ENCODE measurements at regions of chr9 and their contacts with region 1.

Region 1: DNA sequence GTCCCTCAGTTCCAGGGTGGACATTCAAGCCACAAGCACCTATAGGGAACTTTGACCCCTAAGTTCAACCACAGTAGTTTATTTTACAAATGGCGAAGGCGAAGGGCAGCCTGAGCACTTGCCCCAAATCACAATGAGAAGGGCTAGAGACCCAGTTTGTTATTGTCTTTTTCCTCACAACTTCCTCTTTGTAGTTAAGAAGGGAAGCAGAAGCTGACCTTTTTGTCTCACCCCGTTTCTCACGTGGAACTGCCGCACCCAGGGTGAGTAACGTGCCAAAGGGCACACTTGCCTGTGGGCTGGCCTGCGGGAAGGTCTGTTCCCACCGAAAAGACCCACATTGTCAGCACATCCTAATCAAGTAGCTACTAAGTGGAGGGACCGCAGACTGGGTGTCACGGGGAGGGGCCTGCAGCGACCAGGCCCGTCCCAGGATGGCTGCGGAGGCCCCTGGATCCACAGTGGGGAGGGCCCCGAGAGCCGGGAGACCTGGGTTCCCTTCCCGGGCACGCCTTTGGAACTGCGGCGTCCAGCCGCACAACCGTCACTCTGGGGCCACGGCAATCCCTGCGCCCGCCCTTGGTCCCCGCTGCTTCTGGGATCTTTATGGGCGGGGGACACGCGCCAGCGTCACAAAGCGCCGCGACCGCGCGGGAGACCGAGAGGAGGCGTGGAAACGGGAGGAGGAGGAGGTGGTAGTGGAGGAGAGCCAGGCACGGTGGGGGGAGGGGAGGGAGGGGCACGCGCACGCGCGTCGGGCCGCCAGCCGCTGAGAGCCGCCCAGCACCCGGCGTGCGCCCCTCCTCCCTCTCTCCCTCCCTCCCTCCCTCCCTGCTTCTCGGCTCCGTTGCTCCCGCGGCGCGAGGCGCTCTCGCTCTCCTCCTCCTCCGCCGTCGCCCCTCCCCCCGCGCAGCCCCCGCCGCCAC is at the start of gene UBE2R2:
- DNase-seq: peak; percentile 97
- ATAC-seq: peak; percentile 81
- H3K4me3 Mint-ChIP-seq: peak within 1 kb of the TSS; percentile 89
- H3K27ac Mint-ChIP-seq: peak within 1 kb of the TSS; percentile 92
- H3K4me1 Mint-ChIP-seq: peaks cover 56% of the 10 kb centered on the region
- H3K27me3 Mint-ChIP-seq: no peaks in the 10 kb centered on the region
- total RNA-seq, gene UBE2R2: 47.7 to 49.5 TPM

Region 2: GRCh38 chr9:33167046-33167808 is 649.4 kb before region 1 on chr9 and contains the start of gene B4GALT1:
- CTCF ChIA-PET with region 1: no interaction called
- POLR2A ChIA-PET with region 1: no interaction called
- intact Hi-C with region 1: loop called in 1 of 2 experiments (anchors 2 kb)
- DNase-seq: peak; percentile 99
- ATAC-seq: peak; percentile 83
- H3K4me3 Mint-ChIP-seq: peak within 1 kb of the TSS; percentile 95
- H3K27ac Mint-ChIP-seq: peak within 1 kb of the TSS; percentile 97
- H3K4me1 Mint-ChIP-seq: peaks cover 50% of the 10 kb centered on the region
- H3K27me3 Mint-ChIP-seq: no peaks in the 10 kb centered on the region
- total RNA-seq, gene B4GALT1: 44.5 to 47.1 TPM

Region 3: DNA sequence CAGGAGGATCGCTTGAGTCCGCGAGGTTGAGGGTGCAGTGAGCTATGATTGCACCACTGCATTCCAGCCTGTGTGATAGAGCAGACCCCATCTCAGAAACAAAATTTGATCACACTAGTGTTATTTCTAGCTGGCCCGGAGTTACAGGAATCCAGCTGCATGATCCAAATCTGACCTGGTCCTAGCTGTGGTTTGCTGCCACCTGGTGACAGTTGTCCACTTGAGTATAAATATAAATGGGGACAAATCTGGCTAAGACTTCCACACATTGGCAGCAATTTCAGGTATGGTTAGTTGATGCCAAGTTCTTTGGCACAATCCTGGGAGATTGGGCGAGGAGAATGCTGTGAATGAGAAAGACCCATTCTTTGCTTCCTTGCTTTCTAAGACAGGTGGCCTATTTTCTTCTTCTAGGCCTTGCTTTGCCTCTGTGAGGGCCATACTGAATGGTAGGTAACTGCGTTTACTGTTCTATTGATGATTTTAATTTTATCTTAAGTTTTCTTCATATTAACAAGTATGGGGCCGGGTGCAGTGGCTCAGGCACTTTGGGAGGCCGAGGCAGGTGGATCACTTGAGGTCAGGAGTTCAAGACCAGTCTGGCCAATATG is 35.7 kb after region 1 on chr9:
- CTCF ChIA-PET with region 1: interaction called, 27 read pairs
- POLR2A ChIA-PET with region 1: no interaction called
- intact Hi-C with region 1: loop called (anchors 1 kb)
- DNase-seq: peak; percentile 63
- ATAC-seq: peak; percentile 58
- H3K4me3 Mint-ChIP-seq: no peak overlapping the region
- H3K27ac Mint-ChIP-seq: no peak overlapping the region
- H3K4me1 Mint-ChIP-seq: peaks cover 41% of the 10 kb centered on the region
- H3K27me3 Mint-ChIP-seq: no peaks in the 10 kb centered on the region

Region 4: DNA sequence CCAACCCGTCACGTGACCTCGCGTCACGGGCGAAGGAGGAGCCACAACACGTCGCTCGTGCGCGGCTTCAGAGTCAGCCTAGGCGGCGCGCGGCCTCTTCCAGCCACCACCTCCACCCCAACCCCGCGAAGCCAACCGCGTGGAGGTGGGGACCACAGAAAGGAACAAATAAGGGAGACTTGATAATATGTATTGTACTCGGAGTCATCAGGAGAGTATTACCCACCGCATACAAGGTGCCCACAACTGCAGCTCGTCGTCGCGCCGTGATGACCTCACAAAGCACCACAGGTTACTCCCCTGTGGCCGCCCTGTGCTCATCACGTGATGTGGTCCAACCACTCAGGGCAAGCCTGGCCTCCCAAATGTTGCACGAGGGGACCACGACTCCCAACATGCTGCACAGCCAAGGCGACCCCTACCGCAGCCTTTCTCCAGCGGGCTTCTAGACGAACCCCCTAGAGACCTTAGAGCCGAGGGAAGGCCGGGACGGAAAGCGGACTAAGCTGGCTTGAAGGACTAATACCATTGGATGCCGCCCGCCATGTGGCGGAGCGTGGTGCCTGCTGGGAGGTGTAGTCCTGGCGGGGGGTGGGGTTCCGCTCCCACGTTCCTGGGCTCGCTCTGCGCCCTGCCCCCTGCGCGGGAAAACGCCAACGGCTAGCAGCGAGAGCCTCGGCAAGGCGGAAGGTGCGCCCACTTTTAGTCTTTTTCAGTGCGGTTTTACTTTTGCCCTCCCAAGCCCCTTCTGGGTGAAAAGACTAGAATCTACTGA is 232.5 kb after region 1 on chr9:
- CTCF ChIA-PET with region 1: no interaction called
- POLR2A ChIA-PET with region 1: interaction called, 5 read pairs
- intact Hi-C with region 1: loop called (anchors 1 kb)
- DNase-seq: peak; percentile 98
- ATAC-seq: peak; percentile 84
- H3K4me3 Mint-ChIP-seq: peak overlapping the region; percentile 90
- H3K27ac Mint-ChIP-seq: peak overlapping the region; percentile 99
- H3K4me1 Mint-ChIP-seq: peaks cover 38% of the 10 kb centered on the region
- H3K27me3 Mint-ChIP-seq: no peaks in the 10 kb centered on the region

Region 5: GRCh38 chr9:34178520-34179212 is 362.1 kb after region 1 on chr9 and contains the start of gene UBAP1:
- CTCF ChIA-PET with region 1: no interaction called
- POLR2A ChIA-PET with region 1: no interaction called
- intact Hi-C with region 1: loop called in 1 of 2 experiments (anchors 2 kb)
- DNase-seq: peak; percentile 98
- ATAC-seq: peak; percentile 97
- H3K4me3 Mint-ChIP-seq: peak within 1 kb of the TSS; percentile 93
- H3K27ac Mint-ChIP-seq: peak within 1 kb of the TSS; percentile 96
- H3K4me1 Mint-ChIP-seq: peaks cover 20% of the 10 kb centered on the region
- H3K27me3 Mint-ChIP-seq: no peaks in the 10 kb centered on the region
- total RNA-seq, gene UBAP1: 29.5 to 43.3 TPM

Region 6: DNA sequence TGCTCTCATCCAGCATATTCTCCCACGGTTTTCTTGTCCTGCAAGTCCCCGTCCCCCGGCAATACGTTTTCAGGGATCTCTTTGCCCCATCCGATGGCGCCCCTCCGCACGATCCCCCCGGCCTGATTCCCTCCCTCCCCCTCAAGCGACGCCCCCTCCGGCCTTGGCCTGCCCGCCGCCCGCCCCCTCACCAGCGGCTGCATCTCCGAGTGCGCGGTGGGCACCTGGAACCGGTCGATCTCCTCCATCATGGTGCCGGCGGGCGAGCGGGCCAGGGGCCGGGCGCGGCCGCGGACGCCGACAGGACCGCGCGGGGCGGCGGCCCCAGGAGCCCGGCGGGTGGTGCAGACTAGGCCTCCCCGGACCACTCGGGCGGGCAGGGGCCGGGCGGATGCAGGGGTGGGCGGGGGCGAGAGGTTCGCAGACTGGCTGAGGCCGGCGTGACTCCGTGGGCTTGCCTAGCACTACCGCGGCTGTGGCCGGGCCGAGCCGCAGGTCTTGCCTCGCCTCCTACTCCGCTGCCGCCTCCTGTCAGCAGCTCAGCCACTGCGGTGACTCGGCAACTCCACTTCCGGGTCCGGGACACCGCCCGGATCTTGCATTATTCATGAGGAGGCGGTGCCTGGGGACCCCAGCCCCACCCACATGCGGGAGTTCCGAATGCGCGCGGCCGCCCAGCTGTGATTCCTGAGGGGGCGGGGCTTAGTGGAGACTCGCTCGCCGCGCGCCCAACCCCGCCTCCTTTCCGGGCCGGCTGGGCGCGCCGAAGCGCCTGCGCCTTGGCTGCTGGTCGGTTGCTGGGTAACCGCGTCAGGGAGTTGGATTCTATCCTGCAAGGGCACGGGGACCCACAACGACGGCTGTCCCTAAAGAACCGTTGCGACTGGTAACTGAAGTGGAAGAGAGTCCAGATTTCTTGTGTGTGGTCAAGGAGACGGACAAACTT is 641.7 kb after region 1 on chr9 and contains the starts of genes DNAI1 and FAM219A:
- CTCF ChIA-PET with region 1: no interaction called
- POLR2A ChIA-PET with region 1: interaction called, 3 read pairs
- intact Hi-C with region 1: loop called in 1 of 2 experiments (anchors 2 kb)
- DNase-seq: peak; percentile 99
- ATAC-seq: peak; percentile 92
- H3K4me3 Mint-ChIP-seq: peak within 1 kb of the TSS; percentile 84
- H3K27ac Mint-ChIP-seq: peak within 1 kb of the TSS; percentile 75
- H3K4me1 Mint-ChIP-seq: peaks cover 45% of the 10 kb centered on the region
- H3K27me3 Mint-ChIP-seq: peaks cover 9% of the 10 kb centered on the region
- total RNA-seq, gene DNAI1: 0.34 TPM in 1 of 2 experiments, not detected in the other
- total RNA-seq, gene FAM219A: 9.7 to 12.9 TPM